Aorta (tissue), 5 donors: ENCODE measurements at regions of chr15 and their contacts with region 1.

Region 1: GRCh38 chr15:41660235-41661077 is at the start of gene MGA:
- DNase-seq: peak; percentile 95 to 97
- ATAC-seq: peak; percentile 97
- H3K4me3 ChIP-seq: peak within 1 kb of the TSS; percentile 23 to 24
- H3K27ac ChIP-seq: peak within 1 kb of the TSS in 1 of 2 donors; percentile 37
- H3K4me1 ChIP-seq: no peaks in the 10 kb centered on the region
- H3K27me3 ChIP-seq: no peaks in the 10 kb centered on the region
- total RNA-seq, gene MGA: 44.1 to 46.6 TPM

Region 2: DNA sequence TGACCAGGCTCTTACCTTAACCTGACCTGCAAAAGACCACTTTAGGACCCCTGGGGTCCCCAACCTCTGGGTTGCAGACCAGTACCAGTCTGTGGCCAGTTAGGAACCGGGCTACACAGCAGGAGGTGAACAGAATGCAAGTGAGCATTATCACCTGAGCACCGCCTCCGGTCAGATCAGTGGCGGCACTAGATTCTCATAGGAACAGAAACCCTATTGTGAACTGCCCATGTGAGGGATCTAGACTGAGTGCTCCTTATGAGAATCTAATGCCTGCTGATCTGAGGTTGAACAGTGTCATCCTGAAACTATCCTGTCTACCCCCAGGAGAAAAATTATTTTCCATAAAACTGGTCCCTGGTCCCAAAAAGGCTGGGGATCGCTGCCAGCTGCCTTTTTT is 409.0 kb before region 1 on chr15:
- intact Hi-C with region 1: no loop called
- DNase-seq: no peak
- ATAC-seq: no peak
- H3K4me3 ChIP-seq: no peak overlapping the region
- H3K27ac ChIP-seq: no peak overlapping the region
- H3K4me1 ChIP-seq: no peaks in the 10 kb centered on the region
- H3K27me3 ChIP-seq: no peaks in the 10 kb centered on the region

Region 3: DNA sequence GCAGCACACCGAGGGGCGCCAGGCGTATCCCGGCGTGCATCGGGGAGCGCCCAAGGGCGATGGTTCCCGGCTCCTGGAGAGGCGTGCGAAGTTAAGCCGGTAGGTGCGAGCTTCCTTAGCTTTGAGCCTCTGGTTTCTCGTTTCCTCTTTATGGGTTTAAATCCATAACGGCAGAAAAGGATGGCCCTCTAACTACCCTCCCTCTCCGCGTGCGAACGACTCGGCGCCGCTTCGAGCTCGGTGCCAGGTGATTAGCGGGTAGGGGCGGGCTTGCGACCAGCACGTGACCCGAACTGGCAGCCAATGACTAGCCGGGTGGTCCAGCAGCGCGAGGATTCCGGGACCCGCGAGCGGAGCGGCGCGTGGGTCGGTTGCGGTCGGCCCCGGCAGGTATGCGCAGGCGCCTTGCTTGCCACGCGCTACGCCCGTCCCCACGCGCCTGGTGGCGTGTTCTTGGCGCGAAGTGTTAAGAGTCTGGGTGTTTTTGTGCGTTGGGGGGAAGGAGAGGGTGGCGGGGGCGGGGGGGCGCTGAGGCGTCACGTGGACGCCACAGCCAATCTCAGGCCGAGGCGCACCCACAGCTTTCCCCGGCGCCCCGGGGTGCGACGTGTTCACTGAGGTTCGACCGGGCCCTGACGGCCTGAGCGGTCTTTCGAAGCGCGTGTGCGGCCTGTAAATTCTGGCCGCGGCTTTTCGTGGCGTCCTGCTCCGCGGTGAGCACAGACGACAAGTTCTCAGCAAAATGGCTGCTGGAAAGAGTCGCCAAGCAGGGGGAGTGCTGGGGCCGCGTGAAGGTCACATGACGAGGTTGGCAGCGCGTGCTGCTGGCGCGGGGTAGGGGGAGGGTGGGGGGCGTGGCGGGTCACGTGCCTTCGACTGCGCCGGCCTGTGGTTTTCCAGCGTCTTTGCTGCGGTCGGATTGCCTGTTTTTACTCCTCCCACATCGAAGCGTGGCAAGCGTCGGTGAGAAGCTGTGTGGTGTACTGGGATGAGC is 39.0 kb before region 1 on chr15:
- intact Hi-C with region 1: loop called (anchors 1 to 5 kb)
- DNase-seq: peak; percentile 87 to 93
- ATAC-seq: peak; percentile 95
- H3K4me3 ChIP-seq: peak overlapping the region; percentile 9 to 21
- H3K27ac ChIP-seq: peak overlapping the region in 1 of 2 donors; percentile 22
- H3K4me1 ChIP-seq: no peaks in the 10 kb centered on the region
- H3K27me3 ChIP-seq: no peaks in the 10 kb centered on the region